ENCODE measurements at regions of chr16 and their contacts with region 1.

Region 1: GRCh38 chr16:5252791-5253190 is 155.2 kb upstream of the EEF2KMT start:
- DNase-seq: no peak
- H3K4me3 ChIP-seq: no peak overlapping the region
- H3K27ac ChIP-seq: no peak overlapping the region
- H3K4me1 ChIP-seq: no peaks in the 10 kb centered on the region
- H3K27me3 ChIP-seq: no peaks in the 10 kb centered on the region
- CTCF ChIP-seq: no peak
- POLR2A ChIP-seq: no peak

Region 2: DNA sequence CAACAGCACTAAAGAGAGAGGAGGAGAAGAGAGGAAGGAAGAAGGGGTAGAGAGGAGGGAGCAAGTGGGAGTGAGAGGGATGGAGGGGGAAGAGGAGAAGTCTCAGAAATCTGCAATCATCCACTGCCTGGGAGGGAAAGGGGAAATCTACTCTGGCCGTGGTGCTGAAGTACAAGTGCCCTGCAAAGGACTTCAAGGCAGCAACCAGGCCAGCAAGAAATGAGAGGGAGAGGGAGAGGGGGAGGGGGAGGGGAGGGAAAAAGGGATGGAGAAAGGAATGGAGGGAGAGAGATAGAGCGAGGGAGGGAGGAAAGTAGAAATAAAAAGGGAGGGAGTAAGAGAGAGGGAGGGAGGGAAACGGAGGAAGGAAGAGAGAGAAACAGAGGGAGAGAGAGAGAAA is 24.4 kb before region 1 on chr16:
- intact Hi-C with region 1: no loop called
- DNase-seq: no peak
- H3K4me3 ChIP-seq: no peak overlapping the region
- H3K27ac ChIP-seq: no peak overlapping the region
- H3K4me1 ChIP-seq: no peaks in the 10 kb centered on the region
- H3K27me3 ChIP-seq: no peaks in the 10 kb centered on the region
- CTCF ChIP-seq: no peak
- POLR2A ChIP-seq: no peak

Region 3: DNA sequence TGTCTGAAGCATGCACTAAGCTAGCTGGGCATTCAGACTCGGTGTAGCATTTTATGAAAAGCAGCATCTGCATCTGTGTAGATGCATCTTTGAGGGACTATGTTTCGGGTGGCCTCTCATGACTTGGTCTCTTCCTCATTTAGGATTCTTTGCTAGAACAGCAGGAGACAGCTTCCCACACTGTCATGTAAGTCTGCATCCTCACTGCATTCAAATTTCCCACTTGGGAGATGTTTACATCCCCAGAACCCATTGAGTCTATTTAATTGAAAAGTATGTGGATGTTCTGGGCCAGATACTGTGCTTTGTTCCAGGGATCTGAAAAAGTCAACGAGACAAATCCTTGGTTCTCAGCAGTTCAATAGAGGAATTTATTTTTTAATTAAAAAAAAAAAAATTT is 43.4 kb after region 1 on chr16:
- intact Hi-C with region 1: no loop called
- DNase-seq: no peak
- H3K4me3 ChIP-seq: no peak overlapping the region
- H3K27ac ChIP-seq: no peak overlapping the region
- H3K4me1 ChIP-seq: no peaks in the 10 kb centered on the region
- H3K27me3 ChIP-seq: no peaks in the 10 kb centered on the region
- CTCF ChIP-seq: no peak
- POLR2A ChIP-seq: no peak

Region 4: GRCh38 chr16:5615868-5616642 is 363.3 kb after region 1 on chr16:
- intact Hi-C with region 1: loop called in 1 of 2 experiments (anchors 10 kb)
- DNase-seq: peak; percentile 30 to 84 (median 46)
- H3K4me3 ChIP-seq: no peak overlapping the region
- H3K27ac ChIP-seq: no peak overlapping the region
- H3K4me1 ChIP-seq: no peaks in the 10 kb centered on the region
- H3K27me3 ChIP-seq: peaks cover 10% of the 10 kb centered on the region
- CTCF ChIP-seq: peak; percentile 54 to 74 (median 59)
- POLR2A ChIP-seq: no peak